Activated T-helper 1 cell treated with anti-CD3 and anti-CD28 coated beads, Interleukin-12 subunit alpha, Interleukin-12 subunit beta, Interleukin-2, Interleukin-4 antibody, amounts not matched to agents 30 ng/mL and 10 ng/mL and 1 ng/mL, durations not matched to agents 14 hours and 24 hours and 36 hours (primary cell): ENCODE measurements at regions of chr6 and their contacts with region 1.

Region 1: GRCh38 chr6:39153766-39154397 is 38.9 kb upstream of the SAYSD1 start:
- DNase-seq: no peak
- H3K4me3 Mint-ChIP-seq: no peak overlapping the region
- H3K27ac Mint-ChIP-seq: peak overlapping the region; percentile 55
- H3K4me1 Mint-ChIP-seq: peaks cover 33% of the 10 kb centered on the region
- H3K27me3 Mint-ChIP-seq: peaks cover 6% of the 10 kb centered on the region

Region 2: GRCh38 chr6:38871741-38872568 is 281.9 kb before region 1 on chr6:
- intact Hi-C with region 1: loop called (anchors 5 kb)
- DNase-seq: peak; percentile 36
- H3K4me3 Mint-ChIP-seq: no peak overlapping the region
- H3K27ac Mint-ChIP-seq: no peak overlapping the region
- H3K4me1 Mint-ChIP-seq: peaks cover 37% of the 10 kb centered on the region
- H3K27me3 Mint-ChIP-seq: peaks cover 6% of the 10 kb centered on the region

Region 3: GRCh38 chr6:39029156-39030011 is 124.5 kb before region 1 on chr6:
- intact Hi-C with region 1: loop called (anchors 5 kb)
- DNase-seq: peak; percentile 14
- H3K4me3 Mint-ChIP-seq: no peak overlapping the region
- H3K27ac Mint-ChIP-seq: no peak overlapping the region
- H3K4me1 Mint-ChIP-seq: no peaks in the 10 kb centered on the region
- H3K27me3 Mint-ChIP-seq: peaks cover 28% of the 10 kb centered on the region

Region 4: DNA sequence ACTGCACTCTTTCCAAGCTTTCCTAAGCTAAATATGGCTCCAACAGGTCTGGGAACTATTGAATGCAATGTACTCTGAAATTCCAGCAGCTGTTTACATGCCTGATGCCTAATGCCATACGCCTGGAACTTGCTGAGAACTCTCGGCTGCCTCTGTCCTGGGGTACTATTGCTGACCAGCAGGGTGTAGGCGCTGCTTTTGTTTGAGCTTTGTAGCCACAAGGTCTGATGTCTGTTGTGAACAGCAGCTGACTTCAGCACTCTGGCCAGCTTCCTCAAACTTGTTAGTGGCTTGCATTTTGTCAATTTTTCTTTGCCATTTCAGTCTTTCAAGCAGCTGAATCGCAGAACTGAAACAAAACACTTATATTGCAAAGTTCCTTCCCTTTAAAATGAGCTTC is 65.6 kb before region 1 on chr6:
- intact Hi-C with region 1: loop called (anchors 5 kb)
- DNase-seq: no peak
- H3K4me3 Mint-ChIP-seq: no peak overlapping the region
- H3K27ac Mint-ChIP-seq: no peak overlapping the region
- H3K4me1 Mint-ChIP-seq: peaks cover 24% of the 10 kb centered on the region
- H3K27me3 Mint-ChIP-seq: peaks cover 55% of the 10 kb centered on the region

Region 5: DNA sequence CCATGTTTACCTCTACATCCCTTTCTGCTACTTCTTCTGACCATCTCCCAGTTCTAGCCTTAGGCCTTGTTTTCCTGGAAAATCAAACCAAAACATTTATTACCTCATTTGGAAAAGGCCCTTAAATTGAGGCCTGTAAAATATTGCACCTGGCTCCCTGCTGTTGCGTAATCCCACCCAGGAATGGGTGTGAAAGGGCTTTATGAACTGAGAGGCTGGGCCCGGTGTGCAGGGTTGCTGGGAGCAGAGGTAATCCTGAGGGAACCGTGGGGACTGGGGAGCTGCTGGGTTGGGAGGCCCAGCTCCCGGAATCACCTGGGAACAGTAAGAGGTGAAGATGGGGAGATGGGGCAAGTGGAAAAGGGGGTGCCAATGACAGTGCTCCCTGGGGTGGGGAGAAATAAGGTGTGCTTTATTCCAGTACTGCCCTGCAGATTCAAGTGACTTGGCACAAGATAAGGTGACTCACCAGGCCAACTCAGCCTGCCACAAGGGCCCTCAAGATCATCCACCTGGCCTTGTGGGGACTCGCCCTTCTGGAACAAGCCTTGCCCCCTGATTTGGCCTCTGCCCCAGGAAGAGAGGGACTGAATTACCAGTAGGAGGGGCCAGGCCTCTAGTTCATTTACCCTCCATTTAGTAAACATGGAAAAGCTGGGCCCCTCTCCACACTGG is 31.2 kb after region 1 on chr6:
- intact Hi-C with region 1: no loop called
- DNase-seq: no peak
- H3K4me3 Mint-ChIP-seq: no peak overlapping the region
- H3K27ac Mint-ChIP-seq: no peak overlapping the region
- H3K4me1 Mint-ChIP-seq: peaks cover 23% of the 10 kb centered on the region
- H3K27me3 Mint-ChIP-seq: no peaks in the 10 kb centered on the region

Region 6: DNA sequence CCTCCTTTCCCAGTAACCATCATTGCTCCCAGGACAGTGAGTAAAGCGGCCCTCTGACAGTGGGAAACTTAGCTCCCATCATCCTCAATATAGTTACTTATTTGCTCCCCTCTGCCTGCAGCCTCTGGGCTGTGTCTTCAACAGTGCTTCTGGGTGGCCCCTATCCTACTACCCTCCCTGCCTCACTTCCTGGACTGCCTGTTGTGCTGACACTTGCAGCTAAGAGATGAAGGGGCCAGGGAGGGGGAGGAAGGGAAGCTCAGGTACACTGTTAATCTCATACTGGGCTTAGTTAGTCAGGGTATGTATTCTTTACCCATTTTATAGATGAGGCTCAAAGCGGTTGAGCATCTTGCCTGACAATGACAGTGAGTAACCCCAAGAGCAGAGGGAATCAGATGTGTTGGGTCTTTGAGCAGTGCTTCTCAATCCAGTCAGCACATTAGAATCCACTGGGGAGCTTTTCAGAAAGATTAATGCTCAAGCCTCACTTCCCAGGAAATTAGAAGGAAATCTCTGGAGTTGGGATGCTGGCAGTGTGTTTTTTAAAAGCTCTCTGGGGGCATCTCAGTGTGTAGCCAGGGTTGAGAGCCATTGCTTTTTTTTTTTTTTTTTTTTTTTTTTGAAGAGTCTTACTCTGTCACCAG is 102.5 kb after region 1 on chr6:
- intact Hi-C with region 1: loop called (anchors 5 kb)
- DNase-seq: no peak
- H3K4me3 Mint-ChIP-seq: no peak overlapping the region
- H3K27ac Mint-ChIP-seq: peak overlapping the region; percentile 10
- H3K4me1 Mint-ChIP-seq: no peaks in the 10 kb centered on the region
- H3K27me3 Mint-ChIP-seq: peaks cover 15% of the 10 kb centered on the region